ENCODE measurements at regions of chr15 and their contacts with region 1.

Region 1: GRCh38 chr15:89171136-89172072 is 50.0 kb downstream of the RLBP1 start:
- DNase-seq: peak; percentile 71 to 74
- ATAC-seq: peak; percentile 49 to 87
- H3K4me3 ChIP-seq: no peak overlapping the region
- H3K27ac ChIP-seq: peak overlapping the region in 1 of 2 experiments; percentile 22; a peak in 1 of 6 replicates
- H3K4me1 ChIP-seq: peaks cover 21% of the 10 kb centered on the region
- CTCF ChIP-seq: peak; percentile 95
- EP300 ChIP-seq: no peak
- POLR2A ChIP-seq: no peak
- RAD21 ChIP-seq: peak; percentile 86 to 94

Region 2: GRCh38 chr15:88878720-88879184 is 292.7 kb before region 1 on chr15:
- CTCF ChIA-PET with region 1: interaction called, 17 read pairs
- POLR2A ChIA-PET with region 1: no interaction called
- DNase-seq: peak; percentile 68 to 87
- ATAC-seq: peak; percentile 91 to 95
- H3K4me3 ChIP-seq: no peak overlapping the region
- H3K27ac ChIP-seq: no peak overlapping the region
- H3K4me1 ChIP-seq: no peaks in the 10 kb centered on the region
- CTCF ChIP-seq: peak; percentile 78
- EP300 ChIP-seq: no peak
- POLR2A ChIP-seq: no peak
- RAD21 ChIP-seq: peak; percentile 70 to 82

Region 3: DNA sequence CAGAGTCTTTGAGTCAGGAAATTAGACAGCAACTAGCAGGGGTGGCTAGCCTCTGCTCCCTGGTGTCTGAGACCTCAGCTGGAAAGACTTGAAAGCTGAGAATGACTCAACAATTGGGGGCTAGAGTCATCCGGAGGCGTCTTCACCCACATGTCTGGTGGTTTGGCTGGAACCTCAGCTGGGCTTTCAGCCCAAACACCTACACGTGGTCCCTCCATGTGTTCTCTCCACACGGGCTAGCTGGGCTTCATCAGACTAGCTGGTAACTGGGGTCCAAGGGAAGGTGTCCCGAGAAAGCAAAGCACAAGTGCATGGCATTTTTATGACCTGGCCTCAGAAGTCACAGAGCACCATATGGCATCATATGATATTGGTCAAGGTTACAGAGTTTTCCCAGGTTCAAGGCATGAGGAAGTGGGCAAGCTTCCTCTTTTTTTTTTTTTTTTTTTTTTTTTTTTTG is 103.0 kb before region 1 on chr15:
- CTCF ChIA-PET with region 1: interaction called, 735 read pairs
- POLR2A ChIA-PET with region 1: no interaction called
- DNase-seq: peak in 1 of 2 experiments; percentile 46
- ATAC-seq: peak; percentile 67; a peak in 4 of 6 replicates
- H3K4me3 ChIP-seq: no peak overlapping the region
- H3K27ac ChIP-seq: peak overlapping the region; percentile 34 to 57; a peak in 4 of 6 replicates
- H3K4me1 ChIP-seq: peaks cover 25% of the 10 kb centered on the region; the same call in 2 of the 3 replicates
- CTCF ChIP-seq: no peak
- EP300 ChIP-seq: no peak
- POLR2A ChIP-seq: no peak
- RAD21 ChIP-seq: no peak

Region 4: DNA sequence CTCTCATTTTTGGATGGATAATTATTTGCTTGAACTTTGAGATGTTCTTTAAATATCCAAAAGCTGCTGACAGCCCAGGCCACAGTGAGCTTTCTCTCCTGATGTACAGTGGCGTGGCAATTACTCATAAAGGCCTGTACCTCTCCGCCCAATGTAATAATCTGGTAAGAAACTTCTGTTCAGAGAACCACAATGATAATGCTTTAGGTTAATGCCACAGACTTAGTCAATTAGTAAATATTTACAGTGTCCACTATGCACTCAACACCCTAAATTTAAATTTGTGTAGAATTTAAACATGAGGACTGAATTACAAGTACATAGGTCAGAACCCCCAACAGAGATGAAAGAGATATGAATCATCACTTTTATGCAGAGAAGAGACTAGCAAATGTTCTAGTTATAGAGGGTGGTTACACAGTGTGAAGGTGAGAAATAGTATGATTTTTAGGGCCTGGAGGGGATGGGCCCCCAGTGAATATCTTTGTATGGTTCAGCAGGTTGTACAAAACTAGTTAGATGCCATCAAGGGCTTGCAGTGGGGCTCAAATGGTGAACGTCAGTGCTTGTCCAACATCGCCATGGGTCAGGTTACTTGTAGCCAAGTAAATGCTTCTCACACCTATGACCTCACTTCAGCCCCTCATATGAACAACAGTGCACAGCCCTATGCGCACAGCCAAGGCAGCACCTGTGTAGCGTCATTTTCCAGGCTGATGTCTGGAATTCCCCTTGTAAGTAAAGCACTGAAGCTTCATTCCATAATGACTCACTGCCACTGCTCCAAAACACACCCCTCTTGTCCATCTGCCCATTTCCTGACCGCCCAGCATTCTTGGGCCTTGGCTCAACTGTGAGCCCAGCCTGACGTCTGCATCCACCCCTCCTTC is 69.9 kb before region 1 on chr15:
- CTCF ChIA-PET with region 1: interaction called, 34 read pairs
- POLR2A ChIA-PET with region 1: no interaction called
- DNase-seq: peak; percentile 97 to 98
- ATAC-seq: peak; percentile 92 to 93
- H3K4me3 ChIP-seq: no peak overlapping the region; the same call in 2 of the 3 replicates
- H3K27ac ChIP-seq: peak overlapping the region; percentile 85 to 88
- H3K4me1 ChIP-seq: peaks cover 99% of the 10 kb centered on the region
- CTCF ChIP-seq: no peak
- EP300 ChIP-seq: peak; percentile 69 to 71; a peak in 2 of 5 replicates
- POLR2A ChIP-seq: no peak
- RAD21 ChIP-seq: peak; percentile 8 to 24; a peak in 1 of 5 replicates

Region 5: GRCh38 chr15:89150762-89151664 is 20.4 kb before region 1 on chr15:
- CTCF ChIA-PET with region 1: interaction called, 203 read pairs
- POLR2A ChIA-PET with region 1: no interaction called
- DNase-seq: no peak
- ATAC-seq: no peak
- H3K4me3 ChIP-seq: no peak overlapping the region
- H3K27ac ChIP-seq: no peak overlapping the region
- H3K4me1 ChIP-seq: peaks cover 7% of the 10 kb centered on the region; the same call in 2 of the 3 replicates
- CTCF ChIP-seq: no peak
- EP300 ChIP-seq: no peak
- POLR2A ChIP-seq: no peak
- RAD21 ChIP-seq: no peak

Region 6: GRCh38 chr15:89206908-89207331 is 35.5 kb after region 1 on chr15:
- CTCF ChIA-PET with region 1: interaction called, 22 read pairs
- POLR2A ChIA-PET with region 1: no interaction called
- DNase-seq: peak; percentile 82 to 99
- ATAC-seq: peak; percentile 98 to 99
- H3K4me3 ChIP-seq: peak overlapping the region; percentile 36
- H3K27ac ChIP-seq: peak overlapping the region; percentile 23 to 65; a peak in 4 of 6 replicates
- H3K4me1 ChIP-seq: no peaks in the 10 kb centered on the region
- CTCF ChIP-seq: peak; percentile 97
- EP300 ChIP-seq: no peak
- POLR2A ChIP-seq: no peak
- RAD21 ChIP-seq: peak; percentile 93 to 94